ENCODE measurements at regions of chr19 and their contacts with region 1.

Region 1: GRCh38 chr19:1672038-1672768 is 19.8 kb upstream of the TCF3 start:
- DNase-seq: peak; percentile 86
- H3K4me3 ChIP-seq: peak overlapping the region in 1 of 2 experiments; percentile 48; a peak in 1 of 4 replicates
- H3K27ac ChIP-seq: no peak overlapping the region
- H3K4me1 ChIP-seq: peaks cover 0 to 5% of the 10 kb centered on the region in 2 experiments; a peak in 2 of 4 replicates
- H3K27me3 ChIP-seq: peaks cover 59% of the 10 kb centered on the region
- CTCF ChIP-seq: peak; percentile 92
- EP300 ChIP-seq: no peak
- RAD21 ChIP-seq: peak; percentile 74

Region 2: GRCh38 chr19:1465191-1466016 is 206.8 kb before region 1 on chr19:
- CTCF ChIA-PET with region 1: no interaction called
- POLR2A ChIA-PET with region 1: no interaction called
- DNase-seq: no peak
- H3K4me3 ChIP-seq: no peak overlapping the region
- H3K27ac ChIP-seq: no peak overlapping the region
- H3K4me1 ChIP-seq: no peaks in the 10 kb centered on the region
- H3K27me3 ChIP-seq: no peaks in the 10 kb centered on the region
- CTCF ChIP-seq: no peak
- EP300 ChIP-seq: no peak
- RAD21 ChIP-seq: no peak

Region 3: DNA sequence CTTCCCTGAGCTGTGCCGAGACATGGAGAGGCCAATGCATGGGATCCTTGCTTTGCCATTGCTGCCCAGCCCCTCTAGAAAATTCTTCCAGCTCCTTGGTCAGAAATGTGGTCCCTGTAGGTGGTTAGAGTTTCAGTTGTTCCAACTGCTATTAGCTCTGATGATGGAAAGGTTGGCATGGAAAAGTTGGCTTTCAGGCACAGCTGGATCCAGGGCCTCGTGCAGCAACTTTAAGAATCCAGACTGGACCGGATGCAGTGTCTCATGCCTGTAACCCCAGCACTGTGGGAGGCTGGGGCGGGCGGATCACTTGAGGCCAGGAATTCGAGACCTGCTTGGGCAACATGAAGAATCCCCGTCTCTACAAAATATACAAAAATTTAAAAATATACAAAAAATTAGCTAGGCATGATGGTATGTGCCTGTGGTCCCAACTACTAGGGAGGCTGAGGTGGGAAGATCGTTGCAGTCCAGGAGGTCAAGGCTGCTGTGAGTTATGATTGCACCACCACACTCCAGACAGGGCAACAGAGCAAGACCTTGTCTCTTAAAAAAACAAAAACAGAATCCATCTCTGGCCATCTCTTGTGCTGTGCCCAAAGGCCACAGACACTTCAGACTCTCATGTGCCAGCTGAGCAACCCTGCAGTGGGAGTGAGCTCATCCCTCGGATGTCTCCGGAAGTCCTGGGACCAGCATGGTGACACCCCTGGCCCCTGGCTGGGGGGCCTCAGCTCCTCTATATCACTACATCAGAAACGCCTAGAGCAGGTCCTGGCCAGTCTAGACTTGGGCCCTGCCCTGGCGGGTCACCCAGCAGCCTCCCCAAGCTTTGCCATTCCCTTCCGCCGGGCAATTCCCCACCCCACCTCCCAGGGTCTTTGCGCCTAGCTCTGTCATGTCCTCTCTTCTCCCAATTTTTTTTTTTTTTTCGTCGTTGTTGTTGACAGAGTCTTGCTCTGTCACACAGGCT is 120.8 kb before region 1 on chr19:
- CTCF ChIA-PET with region 1: interaction called, 43 read pairs
- POLR2A ChIA-PET with region 1: no interaction called
- DNase-seq: no peak
- H3K4me3 ChIP-seq: no peak overlapping the region
- H3K27ac ChIP-seq: no peak overlapping the region
- H3K4me1 ChIP-seq: no peaks in the 10 kb centered on the region; a peak in 1 of 4 replicates
- H3K27me3 ChIP-seq: no peaks in the 10 kb centered on the region
- CTCF ChIP-seq: no peak
- EP300 ChIP-seq: no peak
- RAD21 ChIP-seq: no peak

Region 4: GRCh38 chr19:1658150-1659086 is 13.8 kb before region 1 on chr19:
- CTCF ChIA-PET with region 1: interaction called, 24 read pairs
- POLR2A ChIA-PET with region 1: no interaction called
- DNase-seq: no peak
- H3K4me3 ChIP-seq: no peak overlapping the region
- H3K27ac ChIP-seq: no peak overlapping the region
- H3K4me1 ChIP-seq: no peaks in the 10 kb centered on the region
- H3K27me3 ChIP-seq: no peaks in the 10 kb centered on the region; the same call in 1 of the 2 replicates
- CTCF ChIP-seq: no peak
- EP300 ChIP-seq: no peak
- RAD21 ChIP-seq: no peak

Region 5: DNA sequence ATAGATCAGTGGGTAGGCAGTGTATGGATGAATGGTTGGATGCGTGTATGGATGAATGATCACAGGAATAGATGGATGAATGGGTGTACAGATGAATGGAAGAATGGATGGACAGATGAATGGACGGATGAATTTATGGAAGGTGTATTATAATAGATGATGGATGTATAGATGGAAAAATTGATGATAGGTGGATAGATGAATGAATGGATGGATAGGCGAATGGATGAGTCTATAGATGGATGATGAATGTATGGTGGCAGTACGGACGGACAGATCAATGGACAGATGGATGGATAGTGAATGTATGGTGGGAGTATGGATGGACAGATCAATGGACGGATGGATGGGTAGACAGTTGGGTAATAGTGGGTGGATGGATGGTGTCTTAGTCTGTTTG is 32.1 kb after region 1 on chr19:
- CTCF ChIA-PET with region 1: no interaction called
- POLR2A ChIA-PET with region 1: no interaction called
- DNase-seq: no peak
- H3K4me3 ChIP-seq: no peak overlapping the region
- H3K27ac ChIP-seq: no peak overlapping the region
- H3K4me1 ChIP-seq: no peaks in the 10 kb centered on the region
- H3K27me3 ChIP-seq: peaks cover 53% of the 10 kb centered on the region
- CTCF ChIP-seq: no peak
- EP300 ChIP-seq: no peak
- RAD21 ChIP-seq: no peak

Region 6: DNA sequence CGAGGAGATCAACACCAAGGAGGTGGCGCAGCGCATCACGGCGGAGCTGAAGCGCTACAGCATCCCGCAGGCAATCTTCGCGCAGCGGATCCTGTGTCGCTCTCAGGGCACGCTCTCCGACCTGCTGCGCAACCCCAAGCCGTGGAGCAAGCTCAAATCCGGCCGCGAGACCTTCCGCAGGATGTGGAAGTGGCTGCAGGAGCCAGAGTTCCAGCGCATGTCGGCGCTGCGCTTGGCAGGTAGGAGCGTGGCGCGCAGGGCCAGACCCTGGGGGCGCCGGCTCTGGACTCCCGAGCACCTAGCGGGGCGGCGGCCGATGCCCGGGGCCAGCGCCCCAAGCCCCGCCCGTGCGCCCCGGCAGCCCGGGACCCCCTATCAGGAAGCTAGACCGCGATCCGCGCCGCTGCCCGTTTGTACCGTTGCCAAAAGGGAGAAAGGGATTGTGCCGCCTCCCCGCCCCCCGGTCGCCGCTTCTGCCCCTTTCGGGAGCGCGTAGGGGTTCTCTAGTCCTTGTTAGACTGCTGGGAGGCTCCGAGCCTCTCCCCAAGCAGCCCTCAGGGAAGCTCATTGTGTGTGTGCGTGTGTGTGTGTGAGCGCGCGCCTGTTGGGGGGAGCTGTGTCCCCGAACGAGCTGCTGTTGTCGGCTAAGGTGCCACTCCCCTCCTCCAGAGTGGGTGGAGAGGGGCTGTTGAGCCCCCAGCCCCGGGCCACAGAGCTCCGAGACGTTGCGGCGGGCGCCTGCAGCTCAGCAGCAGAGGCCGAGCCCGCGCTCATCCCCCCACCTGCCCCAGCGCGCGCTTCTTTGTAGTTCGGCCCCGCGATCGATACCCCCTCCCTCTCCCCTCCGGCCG is 82.6 kb after region 1 on chr19:
- CTCF ChIA-PET with region 1: interaction called, 128 read pairs
- POLR2A ChIA-PET with region 1: no interaction called
- DNase-seq: no peak
- H3K4me3 ChIP-seq: no peak overlapping the region
- H3K27ac ChIP-seq: no peak overlapping the region
- H3K4me1 ChIP-seq: no peaks in the 10 kb centered on the region
- H3K27me3 ChIP-seq: peaks cover 86% of the 10 kb centered on the region
- CTCF ChIP-seq: no peak
- EP300 ChIP-seq: no peak
- RAD21 ChIP-seq: no peak

Region 7: GRCh38 chr19:1780272-1780958 is 108.2 kb after region 1 on chr19:
- CTCF ChIA-PET with region 1: interaction called, 14 read pairs
- POLR2A ChIA-PET with region 1: no interaction called
- DNase-seq: peak; percentile 55
- H3K4me3 ChIP-seq: no peak overlapping the region
- H3K27ac ChIP-seq: no peak overlapping the region
- H3K4me1 ChIP-seq: no peaks in the 10 kb centered on the region
- H3K27me3 ChIP-seq: peaks cover 74% of the 10 kb centered on the region
- CTCF ChIP-seq: peak; percentile 27; the same call in 1 of the 2 replicates
- EP300 ChIP-seq: no peak
- RAD21 ChIP-seq: no peak

Region 8: DNA sequence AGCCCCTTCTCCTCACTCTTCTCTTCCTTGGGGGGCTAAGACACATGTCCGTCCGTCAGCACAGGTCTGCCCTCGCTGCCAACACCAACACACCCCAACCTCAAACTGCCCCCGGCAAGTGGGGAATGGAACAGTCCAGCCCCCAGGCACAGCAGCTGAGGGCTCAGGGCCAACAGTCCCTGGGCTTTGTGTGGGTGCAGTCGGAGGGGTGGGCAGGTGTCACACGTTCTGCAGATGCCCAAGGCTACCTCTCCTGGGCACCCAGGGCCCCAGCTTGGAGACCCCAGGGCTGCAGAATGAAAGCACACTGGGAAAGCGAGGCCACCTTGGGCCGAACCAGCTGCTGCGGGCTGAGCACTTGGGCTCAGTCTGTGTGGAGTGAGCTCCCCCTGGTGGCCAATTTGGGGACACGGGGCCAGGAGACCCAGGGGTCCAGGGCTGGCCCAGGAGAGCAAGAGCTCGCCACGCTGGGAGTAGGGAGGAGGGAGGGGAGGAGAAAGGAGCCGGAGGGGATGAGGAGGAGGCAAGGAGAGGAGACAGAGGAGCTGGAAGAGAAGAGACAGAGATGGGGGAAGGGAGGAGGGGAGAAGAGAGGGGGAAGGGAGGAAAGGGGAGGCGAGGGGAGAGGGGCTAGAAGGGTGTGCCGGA is 153.8 kb after region 1 on chr19:
- CTCF ChIA-PET with region 1: interaction called, 30 read pairs
- POLR2A ChIA-PET with region 1: no interaction called
- DNase-seq: peak; percentile 97
- H3K4me3 ChIP-seq: no peak overlapping the region; a peak in 1 of 4 replicates
- H3K27ac ChIP-seq: no peak overlapping the region
- H3K4me1 ChIP-seq: peaks cover 0 to 7% of the 10 kb centered on the region in 2 experiments; a peak in 1 of 4 replicates
- H3K27me3 ChIP-seq: no peaks in the 10 kb centered on the region
- CTCF ChIP-seq: peak; percentile 96
- EP300 ChIP-seq: no peak
- RAD21 ChIP-seq: peak; percentile 74

Measured in SK-N-SH (cell line).